ENCODE measurements at regions of chr6 and their contacts with region 1.

Region 1: DNA sequence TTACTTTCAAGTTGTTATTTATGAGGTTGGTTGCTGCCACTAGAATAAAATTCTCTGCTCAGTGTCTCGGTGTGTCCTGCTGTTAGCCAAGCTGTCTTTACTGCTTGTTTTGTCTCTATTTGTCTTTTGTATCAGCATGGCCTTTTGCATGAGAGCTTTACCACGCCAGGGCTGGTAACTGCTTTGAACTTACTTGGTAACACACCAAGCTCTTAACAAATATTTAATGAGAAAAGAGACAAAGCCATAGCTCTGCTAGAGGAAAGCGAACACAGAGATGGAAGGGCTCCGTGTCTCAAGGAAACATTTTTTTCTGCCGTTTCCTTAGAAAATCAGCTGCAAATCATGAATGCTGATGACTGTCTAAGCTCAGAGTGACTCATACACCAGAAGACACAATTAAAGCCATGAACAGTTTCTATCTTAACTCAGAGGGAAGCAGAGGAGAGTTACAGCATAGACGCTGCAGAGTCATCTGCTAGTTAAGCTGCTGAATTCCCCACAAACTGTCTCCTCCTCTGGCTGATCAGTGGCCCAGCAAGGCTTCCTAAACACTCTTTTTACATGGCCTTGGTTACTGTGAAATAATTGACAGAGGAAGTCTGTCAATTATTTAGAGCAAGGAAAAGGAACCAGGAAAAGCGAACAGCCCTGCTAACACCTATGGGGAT is 44.8 kb downstream of the AGPAT4 start:
- DNase-seq: no peak
- ATAC-seq: peak; percentile 94
- H3K4me3 Mint-ChIP-seq: no peak overlapping the region
- H3K27ac Mint-ChIP-seq: peak overlapping the region; percentile 61
- H3K4me1 Mint-ChIP-seq: peaks cover 35% of the 10 kb centered on the region
- H3K27me3 Mint-ChIP-seq: no peaks in the 10 kb centered on the region

Region 2: DNA sequence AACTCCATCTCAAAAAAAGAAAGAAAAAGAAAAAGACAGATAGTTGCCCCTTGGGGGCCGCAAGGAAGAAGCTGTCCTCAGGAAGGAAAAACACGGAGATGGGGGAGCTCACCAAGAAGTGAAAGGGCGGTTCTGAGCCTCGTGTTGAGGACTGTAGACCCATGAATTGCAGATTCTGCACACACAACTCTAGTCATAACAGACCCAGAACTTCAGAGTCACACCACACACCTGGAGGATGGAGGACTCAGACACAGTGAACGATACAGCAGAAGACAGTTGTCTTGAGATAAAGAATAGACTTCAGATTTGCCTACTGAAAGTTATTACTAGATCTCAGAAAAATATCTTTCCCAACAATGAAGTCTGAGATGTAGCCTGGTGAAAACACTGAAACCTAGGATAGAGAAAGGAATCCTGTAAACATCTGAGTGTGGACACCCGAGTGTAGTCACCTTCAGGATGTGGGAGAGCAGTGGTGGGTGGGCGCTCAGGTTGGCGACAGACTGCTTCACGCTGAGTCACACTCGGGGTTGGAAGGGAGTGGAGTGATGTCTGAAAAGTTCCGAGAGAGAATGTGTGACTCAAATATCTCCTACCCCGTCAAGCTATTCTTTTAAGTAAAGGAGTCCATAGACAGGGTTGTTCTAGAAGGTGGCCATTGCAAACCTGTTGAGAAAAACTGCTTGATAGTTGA is 149.3 kb before region 1 on chr6:
- CTCF ChIA-PET with region 1: no interaction called
- POLR2A ChIA-PET with region 1: no interaction called
- intact Hi-C with region 1: loop called in 1 of 2 experiments (anchors 5 kb)
- DNase-seq: peak; percentile 84
- ATAC-seq: peak; percentile 91
- H3K4me3 Mint-ChIP-seq: peak overlapping the region; percentile 29
- H3K27ac Mint-ChIP-seq: no peak overlapping the region
- H3K4me1 Mint-ChIP-seq: peaks cover 6% of the 10 kb centered on the region
- H3K27me3 Mint-ChIP-seq: no peaks in the 10 kb centered on the region

Region 3: GRCh38 chr6:161318456-161318855 is 89.4 kb after region 1 on chr6:
- CTCF ChIA-PET with region 1: no interaction called
- POLR2A ChIA-PET with region 1: no interaction called
- intact Hi-C with region 1: no loop called
- DNase-seq: no peak
- ATAC-seq: no peak
- H3K4me3 Mint-ChIP-seq: no peak overlapping the region
- H3K27ac Mint-ChIP-seq: no peak overlapping the region
- H3K4me1 Mint-ChIP-seq: no peaks in the 10 kb centered on the region
- H3K27me3 Mint-ChIP-seq: peaks cover 10% of the 10 kb centered on the region

Measured in activated CD4-positive, alpha-beta T cell treated with anti-CD3 and anti-CD28 coated beads for 36 hours (primary cell).